PC-3 (cell line): ENCODE measurements at regions of chr17 and their contacts with region 1.

Region 1: GRCh38 chr17:6648181-6648580 is 3.2 kb downstream of the MED31 start:
- DNase-seq: peak; percentile 52
- ATAC-seq: 0 out of 2 replicates have a peak, but pooled peaks have one; percentile 20
- H3K4me3 ChIP-seq: no peak overlapping the region
- H3K27ac ChIP-seq: no peak overlapping the region
- H3K4me1 ChIP-seq: peaks cover 38% of the 10 kb centered on the region
- H3K27me3 ChIP-seq: no peaks in the 10 kb centered on the region
- CTCF ChIP-seq: peak; percentile 69

Region 2: DNA sequence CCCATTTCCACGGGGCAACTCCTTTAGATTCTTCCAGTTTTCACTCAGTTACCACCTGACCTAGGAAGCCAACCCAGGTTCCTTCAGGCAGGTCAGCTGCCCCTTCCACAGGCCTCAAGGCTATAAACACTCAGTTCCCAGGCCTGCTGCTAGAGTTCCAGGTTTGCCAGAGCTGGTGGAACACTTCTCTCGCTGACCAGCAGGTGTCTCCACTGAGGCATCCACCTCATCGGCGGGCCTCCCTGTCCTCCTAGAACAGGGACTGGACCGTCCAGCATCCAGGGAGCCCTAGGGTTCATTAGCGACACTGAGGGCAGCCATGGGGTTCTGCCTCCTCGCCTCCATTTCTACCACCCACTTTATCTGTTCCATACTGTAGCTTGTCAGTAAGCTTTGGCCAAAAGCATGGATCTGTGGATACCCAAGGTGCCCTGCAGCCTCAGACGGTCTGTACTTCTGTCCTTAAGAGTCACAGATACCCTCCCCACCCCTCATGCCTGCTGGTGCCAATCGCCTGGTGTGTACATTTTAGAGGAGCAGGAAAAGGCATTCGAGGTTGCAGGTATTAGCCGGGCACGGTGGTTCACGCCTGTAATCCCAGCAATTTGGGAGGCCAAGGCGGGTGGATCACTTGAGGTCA is 174.9 kb before region 1 on chr17:
- CTCF ChIA-PET with region 1: interaction called, 3 read pairs
- POLR2A ChIA-PET with region 1: no interaction called
- intact Hi-C with region 1: loop called (anchors 5 kb)
- DNase-seq: peak; percentile 76
- ATAC-seq: peak; percentile 85
- H3K4me3 ChIP-seq: no peak overlapping the region
- H3K27ac ChIP-seq: no peak overlapping the region
- H3K4me1 ChIP-seq: peaks cover 15% of the 10 kb centered on the region
- H3K27me3 ChIP-seq: no peaks in the 10 kb centered on the region
- CTCF ChIP-seq: peak; percentile 84

Region 3: GRCh38 chr17:6627019-6627418 is 21.2 kb before region 1 on chr17:
- CTCF ChIA-PET with region 1: interaction called, 5 read pairs
- POLR2A ChIA-PET with region 1: no interaction called
- intact Hi-C with region 1: loop called (anchors 2 kb)
- DNase-seq: peak; percentile 46
- ATAC-seq: peak; percentile 77
- H3K4me3 ChIP-seq: peak overlapping the region; percentile 43
- H3K27ac ChIP-seq: peak overlapping the region; percentile 66
- H3K4me1 ChIP-seq: peaks cover 22% of the 10 kb centered on the region
- H3K27me3 ChIP-seq: no peaks in the 10 kb centered on the region
- CTCF ChIP-seq: no peak